K562 (cell line): ENCODE measurements at regions of chr12 and their contacts with region 1.

Region 1: DNA sequence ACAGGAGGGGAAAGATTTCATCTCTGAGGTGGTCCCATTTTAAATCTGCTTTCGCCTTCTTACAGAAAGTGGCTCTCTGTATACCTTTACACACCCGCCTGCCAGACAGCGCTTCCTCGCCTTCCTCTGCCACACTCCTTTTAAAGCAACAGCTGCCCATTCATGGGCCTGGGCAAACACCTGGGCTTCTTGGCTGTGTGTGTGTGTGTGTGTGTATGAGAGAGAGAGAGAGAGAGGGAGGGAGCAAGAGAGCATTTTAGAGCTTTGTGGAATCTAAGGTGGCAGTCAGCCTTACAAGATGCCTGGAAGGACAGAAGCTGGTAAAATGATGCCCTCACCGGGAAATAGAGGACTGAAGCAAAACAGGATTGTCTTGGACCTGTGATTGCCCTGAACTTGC is 20.0 kb downstream of the PTHLH start:
- DNase-seq: no peak
- ATAC-seq: no peak
- H3K4me3 ChIP-seq: no peak overlapping the region
- H3K27ac ChIP-seq: no peak overlapping the region
- H3K4me1 ChIP-seq: no peaks in the 10 kb centered on the region
- H3K27me3 ChIP-seq: no peaks in the 10 kb centered on the region
- CTCF ChIP-seq: no peak
- EP300 ChIP-seq: no peak
- POLR2A ChIP-seq: no peak
- RAD21 ChIP-seq: no peak

Region 2: DNA sequence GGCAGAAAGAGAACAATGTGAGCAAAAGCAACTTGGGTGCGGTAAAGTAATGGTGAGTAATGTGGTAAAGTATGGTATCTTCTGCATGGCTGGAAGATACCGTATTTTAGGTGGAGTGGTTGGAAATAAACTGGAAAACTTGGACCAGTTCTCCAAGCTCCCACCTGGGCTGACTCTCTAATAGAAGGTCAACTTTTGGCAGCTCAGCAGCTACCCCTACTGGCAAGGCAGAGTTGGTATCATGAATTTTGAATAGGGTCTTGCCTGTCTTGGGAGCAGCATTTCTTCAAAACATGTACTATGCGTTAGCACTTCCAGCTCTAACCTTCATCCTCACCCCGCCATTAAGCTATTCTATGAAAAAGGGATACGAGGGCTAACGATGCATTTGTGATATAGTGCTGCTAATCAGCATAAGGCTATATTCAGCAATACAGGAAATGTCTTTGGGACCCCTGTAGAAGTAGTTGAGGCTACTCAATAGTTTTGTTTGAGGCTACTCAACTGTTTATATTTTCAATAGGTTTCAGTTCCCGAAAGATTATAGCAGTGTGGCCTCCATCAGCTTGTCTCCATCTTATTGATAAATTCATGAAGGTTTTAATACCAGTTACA is 920.3 kb after region 1 on chr12:
- CTCF ChIA-PET with region 1: no interaction called
- POLR2A ChIA-PET with region 1: no interaction called
- in situ Hi-C with region 1: no loop called
- intact Hi-C with region 1: loop called (anchors 5 kb)
- DNase-seq: peak; percentile 37 to 67 (median 48)
- ATAC-seq: peak; percentile 81
- H3K4me3 ChIP-seq: no peak overlapping the region
- H3K27ac ChIP-seq: no peak overlapping the region
- H3K4me1 ChIP-seq: no peaks in the 10 kb centered on the region
- H3K27me3 ChIP-seq: no peaks in the 10 kb centered on the region
- CTCF ChIP-seq: peak; percentile 59 to 76 (median 74)
- EP300 ChIP-seq: no peak
- POLR2A ChIP-seq: no peak
- RAD21 ChIP-seq: peak; percentile 60 to 79